Prostate gland (tissue), 2 donors: ENCODE measurements at regions of chr7 and their contacts with region 1.

Region 1: GRCh38 chr7:100691676-100692577 is 2.1 kb downstream of the GIGYF1 start:
- DNase-seq: peak; percentile 76
- H3K4me3 ChIP-seq: peak overlapping the region in 1 of 2 donors; percentile 96
- H3K27ac ChIP-seq: peak overlapping the region in 1 of 2 donors; percentile 88
- H3K4me1 ChIP-seq: peaks cover 13% of the 10 kb centered on the region
- H3K27me3 ChIP-seq: no peaks in the 10 kb centered on the region
- CTCF ChIP-seq: peak; percentile 86 to 93 (median 92)
- POLR2A ChIP-seq: no peak

Region 2: DNA sequence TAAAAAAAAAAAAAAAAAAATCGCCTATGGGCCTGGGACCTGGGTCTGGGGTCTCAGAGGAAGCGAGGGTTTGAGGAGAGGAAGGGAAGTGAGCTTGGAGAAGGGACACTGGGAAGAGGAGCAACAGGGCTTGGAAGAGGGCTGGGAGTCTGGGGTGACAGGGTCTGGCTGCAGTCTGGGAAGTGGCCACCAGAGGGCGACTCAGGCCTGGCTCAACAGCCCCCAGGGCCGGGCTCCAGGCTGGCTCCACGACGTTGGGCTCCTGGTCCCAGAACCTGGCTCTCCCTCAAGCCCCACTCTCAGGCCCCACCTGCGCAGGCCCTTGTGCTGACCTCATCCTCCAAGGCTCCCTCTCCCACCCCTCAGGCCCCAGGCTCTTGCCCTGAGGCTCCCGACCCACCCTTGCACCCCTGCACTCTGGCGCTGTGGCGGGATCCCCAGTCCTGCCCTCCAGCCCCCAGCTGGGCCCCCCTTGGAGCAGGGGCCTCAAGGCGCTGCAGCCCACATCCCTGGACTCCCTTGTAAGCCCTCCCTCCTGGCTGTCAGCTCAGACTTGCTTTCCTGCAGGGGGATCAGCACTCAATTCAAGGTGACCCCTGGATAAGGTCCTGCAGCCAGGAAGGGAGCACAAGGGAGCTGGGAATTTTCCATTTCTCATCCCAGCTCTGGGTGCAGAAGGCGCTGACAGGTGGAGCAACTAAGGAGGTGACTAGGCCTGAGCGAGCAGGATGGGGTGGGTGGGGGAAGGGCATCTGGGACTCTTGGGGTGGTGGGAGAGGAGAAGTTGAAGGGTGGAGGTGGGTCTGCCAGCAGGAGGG is 222.5 kb before region 1 on chr7:
- intact Hi-C with region 1: loop called (anchors 5 kb)
- DNase-seq: peak; percentile 85
- H3K4me3 ChIP-seq: no peak overlapping the region
- H3K27ac ChIP-seq: peak overlapping the region; percentile 44 to 51
- H3K4me1 ChIP-seq: peaks cover 15% of the 10 kb centered on the region
- H3K27me3 ChIP-seq: no peaks in the 10 kb centered on the region
- CTCF ChIP-seq: peak; percentile 90 to 98 (median 96)
- POLR2A ChIP-seq: no peak

Region 3: GRCh38 chr7:100567751-100568175 is 124.2 kb before region 1 on chr7:
- intact Hi-C with region 1: loop called (anchors 2 kb)
- DNase-seq: no peak
- H3K4me3 ChIP-seq: no peak overlapping the region
- H3K27ac ChIP-seq: no peak overlapping the region
- H3K4me1 ChIP-seq: peaks cover 6% of the 10 kb centered on the region
- H3K27me3 ChIP-seq: no peaks in the 10 kb centered on the region
- CTCF ChIP-seq: no peak
- POLR2A ChIP-seq: no peak

Region 4: GRCh38 chr7:100586266-100587025 is 105.5 kb before region 1 on chr7 and contains the start of gene FBXO24:
- intact Hi-C with region 1: loop called (anchors 5 kb)
- DNase-seq: peak; percentile 100
- H3K4me3 ChIP-seq: peak within 1 kb of the TSS; percentile 76 to 98
- H3K27ac ChIP-seq: peak within 1 kb of the TSS; percentile 96 to 99
- H3K4me1 ChIP-seq: peaks cover 32% of the 10 kb centered on the region
- H3K27me3 ChIP-seq: no peaks in the 10 kb centered on the region
- CTCF ChIP-seq: no peak
- POLR2A ChIP-seq: peak; percentile 46
- total RNA-seq, gene FBXO24: 2.3 to 9.7 TPM

Region 5: DNA sequence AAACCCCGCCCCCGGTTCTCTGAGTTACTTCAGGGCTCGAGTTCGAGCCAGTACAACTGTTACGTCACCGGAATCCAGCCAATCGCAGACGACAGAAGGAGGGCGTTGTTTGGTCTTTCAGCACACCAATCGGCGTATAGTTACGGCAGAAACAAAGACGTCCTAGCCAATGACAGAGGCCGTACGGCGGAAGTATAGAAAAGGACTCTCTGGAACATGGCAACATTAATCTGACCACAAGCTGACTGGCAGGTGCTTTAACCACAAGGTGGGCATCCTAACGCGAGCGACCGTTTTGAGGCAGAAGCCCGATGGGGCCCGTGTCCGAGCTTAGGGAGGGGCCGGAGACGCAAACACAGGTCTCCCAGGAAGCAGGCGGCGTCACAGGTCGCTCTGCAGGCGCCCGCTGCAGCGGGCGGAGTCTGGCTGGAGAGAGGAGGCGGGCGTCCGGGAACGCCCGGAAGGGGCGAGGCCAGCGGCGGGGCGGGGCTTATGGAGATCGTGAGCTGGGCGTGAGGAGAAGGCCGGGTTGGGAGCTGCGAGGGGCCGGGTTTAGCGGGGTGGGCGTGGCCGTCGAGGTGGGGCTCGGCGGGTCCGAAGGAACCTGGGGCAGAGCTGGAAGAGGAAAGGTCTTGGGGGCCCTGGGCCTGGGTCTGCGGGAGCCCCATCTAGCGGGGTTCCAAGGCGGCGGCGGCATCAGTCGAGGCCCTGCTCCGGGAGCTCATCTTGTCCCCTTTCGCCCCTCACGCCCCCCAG is 79.8 kb before region 1 on chr7 and contains the start of gene MOSPD3:
- intact Hi-C with region 1: loop called (anchors 5 kb)
- DNase-seq: peak; percentile 99
- H3K4me3 ChIP-seq: peak within 1 kb of the TSS; percentile 63 to 69
- H3K27ac ChIP-seq: peak within 1 kb of the TSS; percentile 96 to 97
- H3K4me1 ChIP-seq: peaks cover 5% of the 10 kb centered on the region
- H3K27me3 ChIP-seq: no peaks in the 10 kb centered on the region
- CTCF ChIP-seq: peak in 2 of 4 experiments; percentile 28 to 42
- POLR2A ChIP-seq: peak; percentile 72
- total RNA-seq, gene MOSPD3: 20.1 to 36.1 TPM

Region 6: DNA sequence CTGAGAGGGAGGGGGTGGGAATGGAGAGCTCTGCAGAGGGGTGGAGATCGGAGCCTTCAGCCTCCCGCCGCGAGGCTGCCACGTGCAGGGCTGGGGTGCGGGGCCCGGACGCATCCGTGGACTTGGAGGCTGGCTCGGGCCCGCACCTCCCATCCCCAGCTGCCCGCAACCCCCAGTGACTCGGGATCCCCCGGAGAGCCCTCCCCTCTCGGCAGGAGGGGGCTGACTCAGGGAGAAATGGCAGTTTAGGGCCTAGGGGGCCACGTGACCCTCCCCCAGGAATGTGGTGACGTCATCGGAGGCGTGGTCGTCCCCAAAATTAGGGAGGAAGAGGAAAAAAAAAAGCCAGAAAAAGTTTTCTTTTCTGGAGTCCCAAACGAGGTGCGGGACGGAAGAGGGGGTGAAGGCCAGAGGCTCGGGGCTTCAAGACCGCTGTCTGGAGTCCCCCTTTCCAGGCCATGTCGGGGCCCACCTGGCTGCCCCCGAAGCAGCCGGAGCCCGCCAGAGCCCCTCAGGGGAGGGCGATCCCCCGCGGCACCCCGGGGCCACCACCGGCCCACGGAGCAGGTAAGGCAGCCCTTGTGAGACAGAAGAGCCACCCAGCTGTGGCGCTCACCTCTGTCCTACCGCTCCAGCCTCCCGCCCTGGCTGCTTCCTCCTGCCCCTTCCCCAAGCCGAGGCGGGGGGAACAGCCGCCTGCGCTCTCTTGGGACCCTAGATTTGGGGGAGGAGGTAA is 175.3 kb after region 1 on chr7 and contains the start of gene TRIP6:
- intact Hi-C with region 1: no loop called
- DNase-seq: peak; percentile 81
- H3K4me3 ChIP-seq: peak within 1 kb of the TSS; percentile 41 to 57
- H3K27ac ChIP-seq: peak within 1 kb of the TSS; percentile 86 to 98
- H3K4me1 ChIP-seq: peaks cover 20% of the 10 kb centered on the region
- H3K27me3 ChIP-seq: no peaks in the 10 kb centered on the region
- CTCF ChIP-seq: no peak
- POLR2A ChIP-seq: peak; percentile 64
- total RNA-seq, gene TRIP6: 65.9 to 113 TPM